ENCODE measurements at regions of chr7 and their contacts with region 1.

Region 1: GRCh38 chr7:130069978-130070860 is at the start of gene KLHDC10:
- DNase-seq: peak; percentile 98
- CTCF ChIP-seq: no peak

Region 2: DNA sequence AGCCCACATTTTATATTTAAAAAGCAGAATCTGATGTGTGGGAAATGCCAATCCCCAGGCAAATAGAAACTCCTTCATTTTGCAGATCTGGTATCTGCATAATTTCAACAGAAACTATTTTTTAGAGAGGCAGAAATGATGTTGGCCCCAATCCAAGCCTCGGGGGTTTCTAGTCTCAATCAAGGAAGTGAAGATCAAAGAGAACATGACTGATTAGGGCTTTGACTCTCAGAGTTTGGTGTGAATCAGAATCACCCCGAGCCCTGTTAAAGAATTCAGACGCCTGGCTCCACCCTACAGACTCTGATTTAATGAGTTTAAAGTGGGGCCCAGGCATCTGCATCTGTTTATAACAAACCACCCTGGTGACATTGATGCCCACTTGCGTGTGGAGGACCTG is 80.8 kb before region 1 on chr7:
- CTCF ChIA-PET with region 1: no interaction called
- POLR2A ChIA-PET with region 1: no interaction called
- DNase-seq: peak; percentile 49
- CTCF ChIP-seq: no peak

Region 3: GRCh38 chr7:130050773-130051125 is 19.5 kb before region 1 on chr7:
- CTCF ChIA-PET with region 1: interaction called, 11 read pairs
- POLR2A ChIA-PET with region 1: no interaction called
- DNase-seq: no peak
- CTCF ChIP-seq: no peak

Region 4: GRCh38 chr7:130084037-130084875 is 14.0 kb after region 1 on chr7:
- CTCF ChIA-PET with region 1: interaction called, 46 read pairs
- POLR2A ChIA-PET with region 1: interaction called, 3 read pairs
- DNase-seq: no peak
- CTCF ChIP-seq: peak; percentile 20

Region 5: GRCh38 chr7:130758429-130759056 is 688.3 kb after region 1 on chr7:
- CTCF ChIA-PET with region 1: interaction called, 34 read pairs
- POLR2A ChIA-PET with region 1: no interaction called
- DNase-seq: peak; percentile 48
- CTCF ChIP-seq: peak; percentile 37